ENCODE measurements at regions of chr5 and their contacts with region 1.

Region 1: DNA sequence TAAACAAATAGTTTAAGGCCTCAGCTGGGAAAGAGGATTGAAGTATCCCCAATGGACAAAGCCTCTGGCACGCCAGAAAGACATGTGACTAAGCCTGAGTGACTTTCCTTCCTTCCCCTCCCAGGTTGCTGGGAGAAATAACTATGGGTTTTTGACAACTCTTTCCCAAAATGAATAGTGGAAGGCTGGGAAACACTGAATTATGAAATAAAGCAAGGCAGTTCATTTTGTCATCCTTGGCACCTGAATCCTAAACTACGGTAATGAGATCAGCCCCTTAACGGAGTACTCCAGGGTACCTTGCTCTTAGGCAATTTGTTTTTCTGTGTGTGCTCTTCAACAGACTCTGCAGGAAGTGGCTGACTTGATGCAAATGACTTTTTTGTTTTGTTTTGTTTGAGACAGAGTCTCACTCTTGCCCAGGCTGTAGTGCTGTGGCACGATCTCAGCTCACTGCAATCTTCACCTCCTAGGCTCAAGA is 75.2 kb downstream of the LMNB1 start:
- DNase-seq: peak in 4 of 10 donors; percentile 25 to 63 (median 48)
- ATAC-seq: peak; percentile 67 to 75
- H3K4me3 Mint-ChIP-seq: peak overlapping the region; percentile 80 to 92 (median 89)
- H3K27ac Mint-ChIP-seq: peak overlapping the region; percentile 95 to 100 (median 99)
- H3K4me1 Mint-ChIP-seq: peaks cover 33 to 71% (median 52%) of the 10 kb centered on the region in 4 donors
- H3K27me3 Mint-ChIP-seq: no peaks in the 10 kb centered on the region

Region 2: GRCh38 chr5:126707080-126707479 is 145.1 kb before region 1 on chr5:
- POLR2A ChIA-PET with region 1: no interaction called
- DNase-seq: no peak
- ATAC-seq: no peak
- H3K4me3 Mint-ChIP-seq: no peak overlapping the region
- H3K27ac Mint-ChIP-seq: no peak overlapping the region
- H3K4me1 Mint-ChIP-seq: no peaks in the 10 kb centered on the region
- H3K27me3 Mint-ChIP-seq: no peaks in the 10 kb centered on the region

Region 3: DNA sequence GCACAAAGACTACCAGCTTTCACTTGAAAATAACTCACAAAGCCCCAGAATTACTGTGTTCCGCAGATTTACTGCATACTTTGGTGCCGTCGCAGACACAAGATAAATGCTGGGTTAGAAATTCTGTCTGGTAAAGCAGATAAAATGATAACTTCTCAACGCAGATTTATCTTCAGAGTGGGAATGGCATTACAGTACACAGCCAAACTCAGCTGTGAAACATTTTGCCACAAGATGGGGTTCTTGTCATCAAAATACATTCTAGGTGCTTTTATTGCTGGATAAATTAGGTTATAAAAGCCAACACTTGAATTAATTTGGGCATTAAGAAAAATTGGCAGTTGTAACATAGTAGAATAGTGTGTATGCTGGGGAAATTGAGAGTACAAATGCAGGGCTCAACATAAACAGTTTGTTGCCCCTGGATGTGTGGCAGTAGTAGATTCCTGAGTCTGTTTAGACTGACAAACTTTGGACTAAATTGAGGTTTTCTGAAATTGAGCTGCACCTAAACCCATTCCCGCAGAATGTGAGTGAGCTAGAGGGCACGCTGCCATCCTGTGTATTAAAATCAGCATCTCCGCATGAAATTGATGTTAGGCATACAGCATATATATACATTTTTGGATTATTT is 14.1 kb before region 1 on chr5:
- POLR2A ChIA-PET with region 1: interaction called, 22 read pairs
- DNase-seq: peak in 2 of 10 donors; percentile 21 to 30
- ATAC-seq: peak; percentile 32 to 54
- H3K4me3 Mint-ChIP-seq: no peak overlapping the region
- H3K27ac Mint-ChIP-seq: no peak overlapping the region
- H3K4me1 Mint-ChIP-seq: no peaks in the 10 kb centered on the region
- H3K27me3 Mint-ChIP-seq: no peaks in the 10 kb centered on the region

Region 4: GRCh38 chr5:126884269-126884819 is 32.2 kb after region 1 on chr5:
- POLR2A ChIA-PET with region 1: interaction called, 13 read pairs
- DNase-seq: no peak
- ATAC-seq: no peak
- H3K4me3 Mint-ChIP-seq: no peak overlapping the region
- H3K27ac Mint-ChIP-seq: peak overlapping the region in 1 of 10 donors; percentile 0
- H3K4me1 Mint-ChIP-seq: peaks cover 0 to 7% (median 0%) of the 10 kb centered on the region in 4 donors
- H3K27me3 Mint-ChIP-seq: no peaks in the 10 kb centered on the region

Region 5: GRCh38 chr5:126954981-126955380 is 102.8 kb after region 1 on chr5:
- POLR2A ChIA-PET with region 1: no interaction called
- DNase-seq: no peak
- ATAC-seq: no peak
- H3K4me3 Mint-ChIP-seq: no peak overlapping the region
- H3K27ac Mint-ChIP-seq: no peak overlapping the region
- H3K4me1 Mint-ChIP-seq: no peaks in the 10 kb centered on the region
- H3K27me3 Mint-ChIP-seq: no peaks in the 10 kb centered on the region

Region 6: GRCh38 chr5:127072861-127073846 is 221.0 kb after region 1 on chr5 and contains the start of gene C5orf63:
- POLR2A ChIA-PET with region 1: interaction called, 29 read pairs
- DNase-seq: peak; percentile 55 to 80 (median 70)
- ATAC-seq: peak; percentile 97 to 99
- H3K4me3 Mint-ChIP-seq: peak within 1 kb of the TSS; percentile 88 to 95 (median 92)
- H3K27ac Mint-ChIP-seq: peak within 1 kb of the TSS; percentile 90 to 99 (median 92)
- H3K4me1 Mint-ChIP-seq: peaks cover 15 to 36% (median 22%) of the 10 kb centered on the region in 4 donors
- H3K27me3 Mint-ChIP-seq: no peaks in the 10 kb centered on the region
- polyA plus RNA-seq, gene C5orf63: 4.2 to 5.7 (median 4.6) TPM